ENCODE measurements at regions of chr1 and their contacts with region 1.

Region 1: DNA sequence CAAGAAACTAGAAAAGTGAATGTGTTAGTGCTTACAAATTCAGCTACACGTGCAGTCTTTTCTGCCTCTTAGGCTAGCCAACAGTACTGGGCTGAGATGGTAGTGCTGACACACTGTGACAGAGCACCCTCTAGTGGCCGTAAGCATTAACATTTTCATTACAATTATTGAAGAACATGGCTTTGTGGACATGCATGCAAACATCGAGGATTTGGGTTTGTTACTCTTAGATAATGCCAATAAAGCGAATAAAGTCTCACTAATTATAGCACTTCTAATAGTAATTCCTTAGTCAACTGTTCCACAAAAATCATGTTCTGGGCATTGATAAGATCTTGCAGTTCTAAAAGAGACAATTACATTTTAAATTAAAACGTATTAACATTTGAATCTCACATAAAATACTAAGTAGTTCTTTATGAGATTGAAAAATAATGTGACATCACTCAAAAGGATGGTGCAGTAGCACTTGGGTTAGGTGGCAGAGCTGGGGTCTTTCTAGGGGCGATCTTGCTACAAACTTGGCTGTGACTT is 47.1 kb downstream of the MYSM1 start:
- DNase-seq: peak; percentile 89
- H3K4me3 ChIP-seq: no peak overlapping the region
- H3K27ac ChIP-seq: no peak overlapping the region
- H3K4me1 ChIP-seq: no peaks in the 10 kb centered on the region
- H3K27me3 ChIP-seq: no peaks in the 10 kb centered on the region
- CTCF ChIP-seq: peak; percentile 64 to 82
- POLR2A ChIP-seq: no peak

Region 2: DNA sequence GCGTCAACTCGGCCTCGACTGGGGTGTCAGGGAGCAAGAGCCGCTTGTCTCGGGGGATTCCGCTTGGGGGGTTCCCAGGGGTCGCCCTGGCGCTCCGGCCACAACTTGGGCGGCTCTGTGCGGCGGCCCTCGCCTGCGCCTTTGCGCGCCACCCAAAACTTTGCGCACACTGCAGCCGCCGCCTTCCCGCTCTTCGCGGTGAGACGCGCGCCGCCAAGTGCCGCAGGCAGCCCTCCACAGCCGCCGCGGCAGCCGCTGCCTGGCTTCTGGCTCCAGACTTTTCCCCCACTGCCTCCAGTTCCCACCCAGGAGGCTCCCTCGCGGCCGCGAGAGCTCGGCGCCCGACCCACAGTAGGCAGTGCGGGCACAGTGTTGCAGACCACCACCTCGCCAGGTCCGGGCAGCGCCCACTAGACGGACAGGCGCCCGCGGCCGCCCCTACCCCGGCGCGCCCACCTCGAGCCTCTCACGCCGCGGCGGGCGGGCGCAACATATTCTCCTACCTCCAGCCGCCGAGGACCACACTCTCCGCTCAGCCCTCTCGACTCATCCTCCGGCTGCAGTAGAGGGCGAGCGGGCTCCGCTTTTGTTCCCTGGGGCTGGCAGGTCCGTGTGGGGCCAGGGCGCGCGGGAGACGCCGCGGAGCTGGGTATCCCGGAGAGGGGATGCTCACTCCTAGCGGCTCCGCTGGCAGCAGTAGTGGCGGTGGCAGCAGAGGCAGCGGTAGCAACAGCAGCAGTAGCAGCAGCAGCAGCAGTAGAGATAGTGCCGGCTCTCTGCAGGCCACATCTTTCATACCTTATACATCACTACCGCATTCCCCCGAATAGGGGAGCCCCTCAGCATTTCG is 402.8 kb before region 1 on chr1:
- CTCF ChIA-PET with region 1: no interaction called
- POLR2A ChIA-PET with region 1: no interaction called
- dilution Hi-C with region 1: no loop called
- intact Hi-C with region 1: loop called (anchors 5 kb)
- DNase-seq: peak; percentile 11
- H3K4me3 ChIP-seq: no peak overlapping the region
- H3K27ac ChIP-seq: no peak overlapping the region
- H3K4me1 ChIP-seq: no peaks in the 10 kb centered on the region
- H3K27me3 ChIP-seq: peaks cover 16 to 21% of the 10 kb centered on the region in 2 experiments
- CTCF ChIP-seq: no peak
- POLR2A ChIP-seq: no peak

Region 3: GRCh38 chr1:58528518-58528917 is 124.2 kb before region 1 on chr1:
- CTCF ChIA-PET with region 1: interaction called, 27 read pairs
- POLR2A ChIA-PET with region 1: no interaction called
- dilution Hi-C with region 1: no loop called
- intact Hi-C with region 1: no loop called
- DNase-seq: no peak
- H3K4me3 ChIP-seq: no peak overlapping the region
- H3K27ac ChIP-seq: no peak overlapping the region
- H3K4me1 ChIP-seq: no peaks in the 10 kb centered on the region
- H3K27me3 ChIP-seq: no peaks in the 10 kb centered on the region
- CTCF ChIP-seq: no peak
- POLR2A ChIP-seq: no peak

Region 4: GRCh38 chr1:58561633-58562032 is 91.1 kb before region 1 on chr1:
- CTCF ChIA-PET with region 1: interaction called, 10 read pairs
- POLR2A ChIA-PET with region 1: no interaction called
- dilution Hi-C with region 1: no loop called
- intact Hi-C with region 1: no loop called
- DNase-seq: no peak
- H3K4me3 ChIP-seq: no peak overlapping the region
- H3K27ac ChIP-seq: no peak overlapping the region
- H3K4me1 ChIP-seq: no peaks in the 10 kb centered on the region
- H3K27me3 ChIP-seq: peaks cover 4 to 13% of the 10 kb centered on the region in 2 experiments
- CTCF ChIP-seq: no peak
- POLR2A ChIP-seq: no peak

Region 5: DNA sequence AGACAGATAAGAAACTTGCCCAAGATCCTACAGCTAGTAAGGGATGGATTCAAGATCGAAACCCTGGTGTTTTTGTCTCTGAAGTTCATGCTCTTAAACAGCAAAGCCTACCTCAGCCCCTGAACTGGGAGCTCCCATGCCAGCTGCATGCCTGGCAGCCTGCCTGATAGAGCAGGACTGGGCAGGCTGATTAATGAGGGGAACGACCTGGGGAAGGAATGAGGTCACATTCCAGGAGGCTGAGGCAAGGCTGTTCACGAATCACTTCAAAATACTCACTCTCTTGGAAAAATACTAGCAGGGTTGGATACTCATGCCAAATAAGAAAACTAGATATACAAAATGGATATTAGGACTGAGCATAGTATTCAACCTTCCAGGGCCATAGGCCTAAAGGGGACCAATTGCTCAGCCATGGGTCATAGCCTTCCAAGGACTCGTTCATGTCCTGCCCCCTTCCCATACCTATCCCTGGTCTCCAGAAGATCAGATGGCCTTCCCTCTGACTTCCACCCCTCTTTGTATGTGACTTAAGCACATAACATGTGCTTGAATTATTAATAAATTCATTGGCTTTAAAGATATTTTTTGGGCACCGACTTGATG is 60.1 kb before region 1 on chr1:
- CTCF ChIA-PET with region 1: interaction called, 14 read pairs
- POLR2A ChIA-PET with region 1: no interaction called
- dilution Hi-C with region 1: no loop called
- intact Hi-C with region 1: no loop called
- DNase-seq: peak; percentile 98
- H3K4me3 ChIP-seq: no peak overlapping the region
- H3K27ac ChIP-seq: peak overlapping the region; percentile 91
- H3K4me1 ChIP-seq: peaks cover 22% of the 10 kb centered on the region
- H3K27me3 ChIP-seq: no peaks in the 10 kb centered on the region
- CTCF ChIP-seq: no peak
- POLR2A ChIP-seq: peak; percentile 79

Region 6: DNA sequence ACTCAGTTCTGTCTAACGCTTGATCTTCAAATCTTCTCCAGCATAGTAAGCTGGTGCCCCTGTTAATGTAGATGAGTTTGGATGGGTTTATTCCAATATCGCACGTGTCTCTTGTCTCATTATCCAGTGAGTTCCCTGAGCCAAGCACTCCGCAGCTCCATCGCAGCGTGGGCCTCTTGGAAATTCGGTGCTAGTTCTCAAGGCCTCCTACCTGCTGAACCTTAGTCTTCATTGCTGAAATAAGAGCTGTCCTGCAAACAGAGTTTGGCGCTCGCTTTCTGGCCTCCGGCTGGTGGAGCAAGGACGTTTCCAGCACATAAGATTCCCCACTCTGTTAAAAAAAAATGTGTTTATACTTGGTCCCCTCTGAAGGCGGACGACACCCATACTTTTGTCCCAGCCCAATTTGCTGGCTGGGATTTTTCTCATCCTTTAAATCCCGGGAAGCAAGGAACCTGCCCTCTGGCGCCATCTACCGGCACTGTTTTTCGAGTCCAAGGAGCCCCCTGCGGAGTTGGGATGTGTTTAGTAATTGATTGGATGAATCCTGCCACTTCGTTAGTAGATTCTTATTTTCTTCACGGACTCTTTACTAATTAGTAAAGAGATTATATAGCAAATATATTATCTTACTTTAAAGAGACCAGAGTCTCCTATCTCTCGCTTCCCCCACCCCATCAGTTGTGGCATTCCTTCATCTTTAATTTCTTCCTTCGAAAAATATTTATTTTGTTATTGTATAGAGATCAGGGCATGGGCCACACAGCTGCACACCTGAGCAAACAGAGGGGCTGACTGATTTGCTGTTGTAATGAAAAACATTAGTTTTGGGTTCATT is 116.5 kb after region 1 on chr1:
- CTCF ChIA-PET with region 1: no interaction called
- POLR2A ChIA-PET with region 1: no interaction called
- dilution Hi-C with region 1: no loop called
- intact Hi-C with region 1: loop called (anchors 1 kb)
- DNase-seq: peak; percentile 74
- H3K4me3 ChIP-seq: no peak overlapping the region
- H3K27ac ChIP-seq: no peak overlapping the region
- H3K4me1 ChIP-seq: peaks cover 34% of the 10 kb centered on the region
- H3K27me3 ChIP-seq: no peaks in the 10 kb centered on the region
- CTCF ChIP-seq: peak; percentile 71 to 81
- POLR2A ChIP-seq: no peak

Measured in endothelial cell of umbilical vein (primary cell).